ENCODE measurements at regions of chr15 and their contacts with region 1.

Region 1: DNA sequence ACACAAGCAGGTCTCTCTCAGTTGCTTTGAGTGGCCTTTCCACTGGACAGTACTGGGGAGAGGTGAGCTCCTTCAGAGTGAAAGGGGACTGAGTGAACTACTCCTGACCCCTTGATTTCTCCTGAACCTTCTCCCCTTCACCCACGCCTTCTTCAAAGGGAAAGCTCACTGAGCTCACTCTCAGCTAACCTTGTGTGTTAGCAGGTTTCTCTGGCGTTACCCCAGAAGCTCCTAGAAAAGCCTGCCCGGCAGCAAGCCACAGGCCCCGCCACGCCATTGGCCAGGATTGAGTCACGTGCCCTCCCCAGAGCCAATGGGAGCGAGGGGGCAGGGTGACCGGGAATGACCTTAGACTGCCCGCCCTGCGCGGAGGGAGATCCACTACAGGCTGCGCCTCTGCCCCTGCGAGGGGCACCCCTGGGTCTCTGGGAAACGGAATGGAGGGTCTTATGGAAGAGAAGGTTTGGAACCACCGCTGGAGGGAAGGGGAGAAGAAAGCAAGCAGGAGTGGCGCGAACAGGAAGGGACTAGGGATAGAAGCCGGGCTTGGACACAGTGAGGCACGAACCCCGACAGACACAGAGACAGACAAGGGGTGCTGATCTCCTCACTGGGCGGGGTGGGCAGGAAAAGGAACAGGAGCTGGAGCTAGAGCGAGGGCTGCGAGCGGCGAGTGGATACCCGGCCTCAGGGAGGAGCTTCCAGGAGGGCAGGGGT is 17.4 kb upstream of the CLK3 start:
- H3K4me3 Mint-ChIP-seq: peak overlapping the region; percentile 92
- H3K27ac Mint-ChIP-seq: peak overlapping the region; percentile 91
- H3K4me1 Mint-ChIP-seq: peaks cover 26% of the 10 kb centered on the region
- H3K27me3 Mint-ChIP-seq: peaks cover 2% of the 10 kb centered on the region

Region 2: GRCh38 chr15:74460871-74461846 is 137.1 kb before region 1 on chr15 and contains the start of gene UBL7:
- intact Hi-C with region 1: loop called (anchors 5 kb)
- H3K4me3 Mint-ChIP-seq: peak within 1 kb of the TSS; percentile 90
- H3K27ac Mint-ChIP-seq: peak within 1 kb of the TSS; percentile 82
- H3K4me1 Mint-ChIP-seq: peaks cover 52% of the 10 kb centered on the region
- H3K27me3 Mint-ChIP-seq: no peaks in the 10 kb centered on the region